CD4-positive, alpha-beta memory T cell (primary cell): ENCODE measurements at regions of chr5 and their contacts with region 1.

Region 1: DNA sequence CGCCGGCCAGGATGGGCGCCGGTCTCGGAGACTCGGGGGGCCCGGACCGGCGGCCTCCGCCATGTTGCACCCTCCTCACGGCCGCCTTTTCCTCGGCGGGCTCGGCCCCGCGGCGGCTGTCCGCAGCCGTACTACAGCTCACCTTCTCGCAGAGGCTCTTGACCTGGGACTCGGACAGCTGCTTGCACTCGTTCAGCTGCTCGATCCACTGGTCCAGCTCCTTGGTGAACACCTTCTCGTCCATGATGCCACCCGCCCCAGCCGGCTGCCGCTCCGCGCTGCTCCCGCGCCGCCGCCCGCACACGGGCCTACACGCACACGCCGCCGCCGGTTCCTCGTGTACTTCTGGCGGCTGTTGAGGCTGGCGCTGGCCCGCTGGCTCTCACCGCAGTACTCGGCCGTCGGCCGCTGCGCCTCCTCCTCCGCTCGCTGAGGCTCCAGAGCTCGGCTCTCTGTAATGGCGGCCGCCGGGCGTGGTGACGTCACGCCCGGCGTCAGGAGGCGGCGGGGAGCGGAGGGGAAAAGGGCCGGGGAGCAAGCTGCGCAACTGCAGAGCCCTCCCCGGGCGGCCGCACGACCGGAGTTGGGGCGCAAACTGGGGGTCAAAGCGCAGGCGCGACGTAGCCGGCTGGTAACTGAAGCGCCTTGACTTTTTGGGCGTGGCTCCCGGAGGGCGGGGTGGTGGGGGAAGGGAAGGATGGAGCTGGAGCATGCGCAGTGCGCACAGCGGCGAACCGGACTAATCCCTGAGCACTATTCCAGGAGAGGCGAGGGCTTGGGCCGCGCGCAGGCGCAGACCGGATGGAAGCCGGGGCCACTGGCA is at the start of gene PPP2CA:
- DNase-seq: peak; percentile 99 to 100 (median 99)
- H3K4me3 ChIP-seq: peak within 1 kb of the TSS; percentile 87
- H3K4me3 Mint-ChIP-seq: peak within 1 kb of the TSS; percentile 77 to 99 (median 97)
- H3K27ac ChIP-seq: peak within 1 kb of the TSS; percentile 100
- H3K27ac Mint-ChIP-seq: peak within 1 kb of the TSS; percentile 98 to 100 (median 99)
- H3K4me1 ChIP-seq: peaks cover 51% of the 10 kb centered on the region
- H3K4me1 Mint-ChIP-seq: peaks cover 40 to 66% (median 48%) of the 10 kb centered on the region in 4 donors
- H3K27me3 ChIP-seq: no peaks in the 10 kb centered on the region
- H3K27me3 Mint-ChIP-seq: no peaks in the 10 kb centered on the region
- total RNA-seq, gene PPP2CA: 106 to 108 TPM

Region 2: GRCh38 chr5:132998556-132998955 is 1227.3 kb before region 1 on chr5:
- CTCF ChIA-PET with region 1: no interaction called
- POLR2A ChIA-PET with region 1: no interaction called
- intact Hi-C with region 1: no loop called
- DNase-seq: no peak
- H3K4me3 ChIP-seq: no peak overlapping the region
- H3K4me3 Mint-ChIP-seq: no peak overlapping the region
- H3K27ac ChIP-seq: no peak overlapping the region
- H3K27ac Mint-ChIP-seq: peak overlapping the region in 3 of 7 donors; percentile 0 to 59 (median 2)
- H3K4me1 ChIP-seq: no peaks in the 10 kb centered on the region
- H3K4me1 Mint-ChIP-seq: no peaks in the 10 kb centered on the region
- H3K27me3 ChIP-seq: no peaks in the 10 kb centered on the region
- H3K27me3 Mint-ChIP-seq: no peaks in the 10 kb centered on the region

Region 3: DNA sequence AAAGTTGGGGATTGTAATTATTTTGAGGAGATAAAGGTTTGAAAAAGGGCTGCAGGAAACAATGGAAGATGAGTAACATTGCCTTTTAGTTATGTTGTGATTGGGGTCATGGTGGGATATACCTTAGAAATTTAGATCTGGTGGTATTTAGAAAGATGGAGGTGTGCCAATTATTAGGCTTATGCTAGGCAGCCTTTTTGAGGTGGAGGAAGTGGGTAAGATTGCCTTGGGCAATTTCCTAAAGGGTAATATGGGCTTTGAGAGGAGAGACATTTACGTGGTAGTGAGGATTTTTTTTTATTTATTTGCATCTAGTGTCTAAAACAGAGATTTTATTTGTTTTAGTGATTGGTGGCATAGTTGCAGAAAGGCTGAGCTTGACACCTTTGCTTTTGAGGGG is 1163.6 kb before region 1 on chr5:
- CTCF ChIA-PET with region 1: no interaction called
- POLR2A ChIA-PET with region 1: no interaction called
- intact Hi-C with region 1: no loop called
- DNase-seq: no peak
- H3K4me3 ChIP-seq: no peak overlapping the region
- H3K4me3 Mint-ChIP-seq: peak overlapping the region in 4 of 8 donors; percentile 29 to 62 (median 43)
- H3K27ac ChIP-seq: no peak overlapping the region
- H3K27ac Mint-ChIP-seq: peak overlapping the region; percentile 1 to 83 (median 41)
- H3K4me1 ChIP-seq: peaks cover 42% of the 10 kb centered on the region
- H3K4me1 Mint-ChIP-seq: peaks cover 26 to 52% (median 38%) of the 10 kb centered on the region in 4 donors
- H3K27me3 ChIP-seq: no peaks in the 10 kb centered on the region
- H3K27me3 Mint-ChIP-seq: no peaks in the 10 kb centered on the region

Region 4: GRCh38 chr5:133569347-133569746 is 656.5 kb before region 1 on chr5:
- CTCF ChIA-PET with region 1: no interaction called
- POLR2A ChIA-PET with region 1: no interaction called
- intact Hi-C with region 1: no loop called
- DNase-seq: no peak
- H3K4me3 ChIP-seq: no peak overlapping the region
- H3K4me3 Mint-ChIP-seq: no peak overlapping the region
- H3K27ac ChIP-seq: no peak overlapping the region
- H3K27ac Mint-ChIP-seq: no peak overlapping the region
- H3K4me1 ChIP-seq: no peaks in the 10 kb centered on the region
- H3K4me1 Mint-ChIP-seq: no peaks in the 10 kb centered on the region
- H3K27me3 ChIP-seq: no peaks in the 10 kb centered on the region
- H3K27me3 Mint-ChIP-seq: peaks cover 23 to 24% of the 10 kb centered on the region in 2 donors

Region 5: DNA sequence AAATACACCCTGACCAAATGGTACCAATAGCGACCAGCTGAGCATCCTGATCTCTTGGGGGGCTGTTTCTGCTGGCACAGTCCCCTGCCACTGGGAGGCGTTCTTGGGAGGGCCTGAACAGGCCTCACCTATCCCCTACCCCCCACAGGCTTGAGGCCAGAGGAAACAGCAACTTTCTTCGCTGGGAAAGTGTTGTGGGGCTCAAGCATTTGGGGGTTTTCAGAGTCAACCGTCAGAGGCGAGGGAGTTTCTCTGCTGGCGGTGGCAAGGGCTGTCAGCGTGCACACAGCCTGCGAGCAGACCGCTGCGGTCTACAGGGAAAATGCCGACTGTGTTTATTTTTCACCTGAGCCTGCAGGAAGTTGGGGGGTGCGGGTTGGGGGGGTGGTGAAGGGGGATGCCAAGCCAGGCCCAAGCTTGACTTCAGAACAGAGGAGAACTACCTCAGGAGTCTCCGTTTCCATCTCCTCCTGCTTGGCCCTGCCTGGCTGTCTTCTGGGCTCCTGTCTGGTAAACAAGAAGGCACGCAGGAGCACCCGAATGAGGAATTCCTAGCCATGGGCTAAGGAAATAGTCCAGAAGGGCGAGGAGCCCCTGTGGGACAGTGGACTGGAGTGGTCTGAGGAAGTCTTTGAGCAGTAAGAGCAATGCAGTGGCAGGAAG is 93.3 kb before region 1 on chr5:
- CTCF ChIA-PET with region 1: no interaction called
- POLR2A ChIA-PET with region 1: interaction called, 10 read pairs
- intact Hi-C with region 1: no loop called
- DNase-seq: peak; percentile 86 to 97 (median 88)
- H3K4me3 ChIP-seq: peak overlapping the region; percentile 43 to 68
- H3K4me3 Mint-ChIP-seq: peak overlapping the region; percentile 86 to 99 (median 96)
- H3K27ac ChIP-seq: peak overlapping the region; percentile 97
- H3K27ac Mint-ChIP-seq: peak overlapping the region; percentile 95 to 99 (median 98)
- H3K4me1 ChIP-seq: peaks cover 100% of the 10 kb centered on the region
- H3K4me1 Mint-ChIP-seq: peaks cover 65 to 100% (median 85%) of the 10 kb centered on the region in 4 donors
- H3K27me3 ChIP-seq: no peaks in the 10 kb centered on the region
- H3K27me3 Mint-ChIP-seq: no peaks in the 10 kb centered on the region

Region 6: DNA sequence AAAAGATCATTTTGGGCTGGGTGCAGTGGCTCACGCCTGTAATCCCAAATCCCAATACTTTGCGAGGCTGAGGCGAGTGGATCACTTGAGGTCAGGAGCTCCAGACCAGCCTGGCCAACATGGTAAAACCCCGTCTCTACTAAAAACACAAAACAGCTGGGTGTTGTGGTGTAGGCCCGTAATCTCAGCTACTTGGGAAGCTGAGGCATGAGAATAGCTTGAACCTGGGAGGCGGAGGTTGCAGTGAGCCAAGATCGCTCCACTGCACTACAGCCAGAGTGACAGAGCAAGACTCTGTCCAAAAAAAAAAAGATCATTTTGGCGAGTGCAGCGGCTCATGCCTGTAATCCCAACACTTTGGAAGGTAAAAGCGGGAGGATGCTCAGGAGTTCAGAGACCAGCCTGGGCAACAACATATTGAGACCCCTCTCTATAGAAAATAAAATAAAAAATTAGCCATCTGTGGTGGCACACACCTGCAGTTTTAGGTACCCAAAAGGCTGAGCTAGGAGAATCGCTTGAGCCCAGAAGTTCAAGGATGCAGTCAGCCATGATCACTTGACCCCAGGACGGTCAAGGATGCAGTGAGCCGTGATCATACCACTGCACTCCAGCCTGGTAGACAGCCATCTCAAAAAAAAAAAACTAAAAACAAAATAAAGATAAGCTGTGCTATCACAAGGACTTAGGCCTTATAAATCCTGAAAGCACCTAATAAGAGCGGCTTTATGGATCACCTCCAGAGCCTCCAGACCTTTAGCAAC is 16.2 kb before region 1 on chr5:
- CTCF ChIA-PET with region 1: interaction called, 15 read pairs
- POLR2A ChIA-PET with region 1: interaction called, 25 read pairs
- intact Hi-C with region 1: no loop called
- DNase-seq: no peak
- H3K4me3 ChIP-seq: no peak overlapping the region
- H3K4me3 Mint-ChIP-seq: peak overlapping the region in 6 of 8 donors; percentile 5 to 43 (median 36)
- H3K27ac ChIP-seq: no peak overlapping the region
- H3K27ac Mint-ChIP-seq: peak overlapping the region in 4 of 7 donors; percentile 7 to 59 (median 38)
- H3K4me1 ChIP-seq: peaks cover 74% of the 10 kb centered on the region
- H3K4me1 Mint-ChIP-seq: peaks cover 42 to 76% (median 61%) of the 10 kb centered on the region in 4 donors
- H3K27me3 ChIP-seq: no peaks in the 10 kb centered on the region
- H3K27me3 Mint-ChIP-seq: no peaks in the 10 kb centered on the region

Region 7: GRCh38 chr5:134289509-134290113 is 63.8 kb after region 1 on chr5:
- CTCF ChIA-PET with region 1: interaction called, 20 read pairs
- POLR2A ChIA-PET with region 1: interaction called, 4 read pairs
- intact Hi-C with region 1: loop called (anchors 1 kb)
- DNase-seq: peak; percentile 50 to 55 (median 52)
- H3K4me3 ChIP-seq: no peak overlapping the region
- H3K4me3 Mint-ChIP-seq: no peak overlapping the region
- H3K27ac ChIP-seq: no peak overlapping the region
- H3K27ac Mint-ChIP-seq: peak overlapping the region in 2 of 7 donors; percentile 17 to 32
- H3K4me1 ChIP-seq: no peaks in the 10 kb centered on the region
- H3K4me1 Mint-ChIP-seq: no peaks in the 10 kb centered on the region
- H3K27me3 ChIP-seq: no peaks in the 10 kb centered on the region
- H3K27me3 Mint-ChIP-seq: peaks cover 3 to 5% of the 10 kb centered on the region in 2 donors

Region 8: DNA sequence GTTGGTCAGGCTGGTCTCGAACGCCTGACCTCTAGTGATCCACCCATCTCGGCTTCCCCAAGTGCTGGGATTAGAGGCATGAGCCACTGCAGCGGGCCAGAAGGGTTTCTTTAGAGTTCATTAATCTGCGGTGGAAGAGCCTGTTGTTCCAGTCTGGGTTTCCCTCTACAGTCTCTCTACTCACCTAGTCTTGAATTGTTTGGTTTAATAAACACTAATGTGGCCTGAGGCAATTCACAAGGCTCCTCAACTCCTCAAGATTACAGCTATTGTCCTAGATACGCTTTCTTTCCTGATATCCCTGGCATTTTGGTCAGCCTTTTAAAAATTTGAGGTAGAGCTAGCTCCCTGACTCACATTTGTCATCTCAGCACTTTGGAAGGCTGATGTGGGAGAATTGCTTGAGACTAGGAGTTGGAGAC is 411.3 kb after region 1 on chr5:
- CTCF ChIA-PET with region 1: no interaction called
- POLR2A ChIA-PET with region 1: no interaction called
- intact Hi-C with region 1: loop called (anchors 5 kb)
- DNase-seq: no peak
- H3K4me3 ChIP-seq: no peak overlapping the region
- H3K4me3 Mint-ChIP-seq: no peak overlapping the region
- H3K27ac ChIP-seq: no peak overlapping the region
- H3K27ac Mint-ChIP-seq: no peak overlapping the region
- H3K4me1 ChIP-seq: peaks cover 4% of the 10 kb centered on the region
- H3K4me1 Mint-ChIP-seq: peaks cover 0 to 13% (median under 1%) of the 10 kb centered on the region in 4 donors
- H3K27me3 ChIP-seq: no peaks in the 10 kb centered on the region
- H3K27me3 Mint-ChIP-seq: no peaks in the 10 kb centered on the region

Region 9: DNA sequence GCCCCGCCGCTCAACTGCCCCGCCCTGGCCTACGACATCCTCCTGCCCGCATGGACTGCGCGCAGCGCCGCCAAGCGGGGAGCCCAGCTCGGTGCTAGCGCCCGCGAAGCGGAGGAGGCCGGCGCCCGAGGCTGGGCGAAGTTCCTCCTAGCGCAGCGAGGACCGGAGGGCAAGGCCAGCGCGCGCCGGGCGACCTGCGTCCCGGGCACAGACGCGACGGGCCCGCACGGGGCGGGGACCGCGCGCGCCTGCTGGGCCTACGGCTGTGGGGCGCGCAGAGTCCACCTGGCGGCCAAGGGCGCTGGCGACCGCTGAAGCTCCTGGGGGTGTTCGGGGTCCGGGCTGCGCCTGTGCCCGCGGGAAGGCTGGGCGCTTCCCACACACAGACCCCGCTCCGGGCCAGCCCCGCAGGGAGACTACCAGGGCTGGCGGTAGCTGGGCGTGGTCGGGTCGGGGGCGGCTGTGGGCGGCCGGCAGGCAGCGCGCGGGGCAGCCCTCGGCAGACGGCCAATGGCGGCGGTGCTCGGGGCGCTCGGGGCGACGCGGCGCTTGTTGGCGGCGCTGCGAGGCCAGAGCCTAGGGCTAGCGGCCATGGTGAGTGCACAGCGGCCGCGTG is 678.9 kb after region 1 on chr5 and contains the start of gene PCBD2:
- CTCF ChIA-PET with region 1: no interaction called
- POLR2A ChIA-PET with region 1: interaction called, 14 read pairs
- intact Hi-C with region 1: loop called (anchors 2 kb)
- DNase-seq: peak; percentile 90 to 92 (median 91)
- H3K4me3 ChIP-seq: peak within 1 kb of the TSS; percentile 59 to 84
- H3K4me3 Mint-ChIP-seq: peak within 1 kb of the TSS; percentile 94 to 100 (median 97)
- H3K27ac ChIP-seq: peak within 1 kb of the TSS; percentile 85
- H3K27ac Mint-ChIP-seq: peak within 1 kb of the TSS; percentile 97 to 99 (median 99)
- H3K4me1 ChIP-seq: no peaks in the 10 kb centered on the region
- H3K4me1 Mint-ChIP-seq: peaks cover 4 to 9% (median 5%) of the 10 kb centered on the region in 4 donors
- H3K27me3 ChIP-seq: no peaks in the 10 kb centered on the region
- H3K27me3 Mint-ChIP-seq: no peaks in the 10 kb centered on the region
- total RNA-seq, gene PCBD2: 13.1 to 15.6 TPM